Tibial artery (tissue), 4 donors: ENCODE measurements at regions of chr9 and their contacts with region 1.

Region 1: GRCh38 chr9:70924895-70925547 is 196.4 kb downstream of the TRPM3 start:
- DNase-seq: peak; percentile 54 to 68
- H3K4me3 ChIP-seq: peak overlapping the region; percentile 33
- H3K27ac ChIP-seq: peak overlapping the region; percentile 21 to 73
- H3K4me1 ChIP-seq: peaks cover 0 to 17% (median 6%) of the 10 kb centered on the region in 4 donors
- H3K27me3 ChIP-seq: no peaks in the 10 kb centered on the region
- CTCF ChIP-seq: peak; percentile 77 to 89

Region 2: DNA sequence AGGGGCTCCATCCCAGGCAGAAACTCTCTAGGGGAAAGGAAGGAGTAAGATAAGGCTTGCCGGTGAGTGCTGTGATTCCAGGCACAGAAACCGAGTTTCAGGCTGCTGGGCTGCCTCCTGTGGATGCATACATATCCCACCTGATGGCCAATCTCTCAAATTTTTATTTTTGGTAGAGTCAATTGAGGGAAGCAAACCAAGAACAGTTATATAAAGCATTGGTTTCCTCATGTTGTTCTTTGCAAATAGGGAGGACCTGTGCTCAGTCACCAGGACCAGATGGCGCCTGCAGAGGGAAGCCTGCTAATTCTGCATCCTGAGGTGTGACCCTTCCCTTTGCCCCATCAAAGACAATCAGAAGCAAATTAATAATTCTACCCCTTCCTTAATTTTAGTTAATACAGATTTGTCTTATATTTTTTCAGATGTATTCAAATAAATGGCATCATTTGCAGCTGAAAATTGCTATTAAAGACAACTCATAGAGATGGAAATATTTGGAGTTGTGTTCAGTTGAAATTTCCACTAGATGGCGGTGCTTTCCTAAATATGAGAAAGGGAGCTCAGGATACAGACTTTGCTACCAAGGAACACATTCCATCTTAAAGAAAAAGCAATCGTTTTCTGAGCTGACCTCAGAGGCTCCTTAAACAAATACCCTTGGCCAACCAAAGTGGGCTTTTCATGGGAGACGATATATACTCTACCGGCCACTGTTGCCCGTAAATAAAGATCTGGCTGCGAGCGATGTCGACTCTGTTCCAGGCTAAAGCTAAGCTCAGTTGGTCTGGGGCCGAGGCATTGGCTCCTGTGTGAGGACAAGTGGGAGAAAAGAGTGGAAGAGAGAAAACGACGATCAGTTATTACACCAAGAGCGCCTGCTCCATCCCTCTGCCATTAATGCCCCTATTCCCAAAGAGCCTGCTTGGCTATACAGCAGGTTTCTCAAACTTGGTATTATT is 284.9 kb before region 1 on chr9:
- intact Hi-C with region 1: loop called (anchors 10 kb)
- DNase-seq: no peak
- H3K4me3 ChIP-seq: peak overlapping the region; percentile 25 to 26
- H3K27ac ChIP-seq: no peak overlapping the region
- H3K4me1 ChIP-seq: peaks cover 0 to 5% (median 0%) of the 10 kb centered on the region in 4 donors
- H3K27me3 ChIP-seq: no peaks in the 10 kb centered on the region
- CTCF ChIP-seq: peak; percentile 64 to 80

Region 3: DNA sequence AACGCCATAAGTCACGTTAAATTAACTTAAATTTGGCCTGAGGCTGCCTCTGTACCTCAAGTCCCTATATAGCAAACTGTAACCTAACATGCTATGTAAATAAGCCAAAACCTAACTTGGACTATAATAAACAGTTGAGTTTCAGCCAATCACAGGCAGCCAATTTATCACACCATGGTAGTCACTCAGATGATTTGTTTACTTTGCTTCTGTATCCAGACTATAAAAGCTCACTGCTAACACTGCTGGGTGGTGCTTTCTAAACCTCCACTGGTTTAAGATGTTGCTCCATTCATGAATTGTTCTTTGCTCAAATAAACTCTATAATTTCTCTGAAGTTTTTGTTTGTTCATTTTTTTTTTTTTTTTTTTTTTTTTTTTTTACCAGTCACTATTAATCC is 133.6 kb after region 1 on chr9:
- intact Hi-C with region 1: no loop called
- DNase-seq: no peak
- H3K4me3 ChIP-seq: no peak overlapping the region
- H3K27ac ChIP-seq: no peak overlapping the region
- H3K4me1 ChIP-seq: no peaks in the 10 kb centered on the region
- H3K27me3 ChIP-seq: no peaks in the 10 kb centered on the region
- CTCF ChIP-seq: no peak

Region 4: GRCh38 chr9:71249729-71250317 is 324.8 kb after region 1 on chr9:
- intact Hi-C with region 1: loop called (anchors 5 kb)
- DNase-seq: no peak
- H3K4me3 ChIP-seq: no peak overlapping the region
- H3K27ac ChIP-seq: no peak overlapping the region
- H3K4me1 ChIP-seq: no peaks in the 10 kb centered on the region
- H3K27me3 ChIP-seq: no peaks in the 10 kb centered on the region
- CTCF ChIP-seq: peak; percentile 77 to 78